Activated naive CD4-positive, alpha-beta T cell treated with anti-CD3 and anti-CD28 coated beads for 36 hours (primary cell): ENCODE measurements at regions of chr12 and their contacts with region 1.

Region 1: DNA sequence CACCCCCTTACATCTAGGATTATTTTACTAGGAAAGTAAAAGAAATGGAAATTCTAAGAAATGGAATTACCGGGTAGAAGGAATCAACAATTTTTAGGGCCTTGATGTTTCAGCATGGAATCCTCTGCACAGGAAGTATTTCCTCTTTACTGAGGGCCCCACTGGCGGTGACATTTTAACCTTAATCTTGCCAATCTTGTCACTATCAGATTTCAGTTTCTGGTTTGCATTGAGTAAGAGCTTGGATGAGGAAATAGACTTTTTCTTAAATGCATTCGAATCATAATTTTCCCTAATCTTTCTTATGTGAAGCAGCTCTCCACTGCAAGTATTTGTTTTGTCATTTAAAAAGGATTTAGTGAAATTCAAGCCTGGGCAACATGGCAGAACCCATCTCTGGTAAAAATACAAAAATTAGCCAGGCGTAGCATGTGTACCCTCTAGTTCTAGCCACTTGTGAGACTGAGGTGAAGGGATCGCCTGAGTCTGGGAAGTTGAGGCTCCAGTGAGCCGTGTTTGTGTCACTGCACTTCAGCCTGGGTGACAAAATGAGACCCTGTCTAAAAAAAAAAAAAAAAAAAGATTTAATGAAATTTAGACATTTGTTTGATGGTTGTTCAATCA is 40.7 kb downstream of the TPCN1 start:
- DNase-seq: peak; percentile 79
- H3K4me3 Mint-ChIP-seq: peak overlapping the region; percentile 18
- H3K27ac Mint-ChIP-seq: peak overlapping the region; percentile 79
- H3K4me1 Mint-ChIP-seq: peaks cover 53% of the 10 kb centered on the region
- H3K27me3 Mint-ChIP-seq: no peaks in the 10 kb centered on the region

Region 2: DNA sequence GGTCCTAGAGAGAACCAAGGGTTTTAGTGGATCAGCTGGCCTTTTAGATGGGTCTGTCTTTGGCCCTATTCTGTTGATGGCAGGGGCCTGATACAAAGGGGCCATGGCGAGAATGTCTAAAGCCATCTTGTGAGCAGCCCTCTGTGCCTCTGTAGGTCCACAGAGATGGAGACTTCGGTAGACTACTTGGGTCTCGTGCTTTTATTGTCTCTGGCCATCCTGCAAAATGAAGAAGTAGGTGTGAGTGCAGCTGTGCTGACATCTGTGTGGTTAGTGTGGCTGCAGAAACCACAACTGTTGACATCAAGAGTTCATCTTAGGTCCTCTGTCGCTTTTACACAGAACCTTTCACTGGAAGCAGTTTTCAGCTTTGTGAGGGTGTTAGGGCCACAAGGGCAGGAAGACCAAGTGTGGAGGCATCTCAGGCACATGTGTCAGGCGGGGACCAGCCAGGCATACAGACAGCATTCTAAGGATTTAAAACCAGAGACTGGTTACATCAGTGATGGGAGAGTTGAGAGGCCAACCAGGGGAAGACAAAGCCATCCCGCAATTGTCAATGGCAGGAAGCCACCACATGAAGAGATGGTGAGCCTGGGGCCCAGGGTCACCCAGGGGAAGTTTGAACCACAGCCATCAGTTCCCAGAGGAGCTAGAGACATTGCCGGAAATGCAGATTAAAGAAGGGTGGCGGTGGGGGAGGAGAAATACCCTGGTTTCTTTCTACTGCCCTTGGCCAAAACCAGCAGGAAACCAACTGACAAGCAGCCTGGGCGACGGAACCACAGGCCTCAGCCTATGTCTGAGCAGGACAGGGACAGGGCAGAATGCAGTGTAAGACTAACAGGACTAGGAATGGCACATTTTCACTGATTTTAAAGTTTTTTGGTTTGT is 53.7 kb before region 1 on chr12:
- CTCF ChIA-PET with region 1: interaction called, 3 read pairs
- intact Hi-C with region 1: loop called (anchors 2 kb)
- DNase-seq: peak; percentile 89
- H3K4me3 Mint-ChIP-seq: peak overlapping the region; percentile 34
- H3K27ac Mint-ChIP-seq: peak overlapping the region; percentile 95
- H3K4me1 Mint-ChIP-seq: peaks cover 41% of the 10 kb centered on the region
- H3K27me3 Mint-ChIP-seq: no peaks in the 10 kb centered on the region